Activated naive CD4-positive, alpha-beta T cell treated with anti-CD3 and anti-CD28 coated beads for 36 hours (primary cell): ENCODE measurements at regions of chr15 and their contacts with region 1.

Region 1: GRCh38 chr15:39874890-39875549 is 45.0 kb downstream of the GPR176 start:
- DNase-seq: peak; percentile 54
- H3K4me3 Mint-ChIP-seq: no peak overlapping the region
- H3K27ac Mint-ChIP-seq: no peak overlapping the region
- H3K4me1 Mint-ChIP-seq: peaks cover 4% of the 10 kb centered on the region
- H3K27me3 Mint-ChIP-seq: peaks cover 2% of the 10 kb centered on the region

Region 2: GRCh38 chr15:39686000-39686613 is 188.9 kb before region 1 on chr15:
- CTCF ChIA-PET with region 1: interaction called, 4 read pairs
- intact Hi-C with region 1: loop called (anchors 1 kb)
- DNase-seq: peak; percentile 54
- H3K4me3 Mint-ChIP-seq: no peak overlapping the region
- H3K27ac Mint-ChIP-seq: no peak overlapping the region
- H3K4me1 Mint-ChIP-seq: no peaks in the 10 kb centered on the region
- H3K27me3 Mint-ChIP-seq: no peaks in the 10 kb centered on the region

Region 3: DNA sequence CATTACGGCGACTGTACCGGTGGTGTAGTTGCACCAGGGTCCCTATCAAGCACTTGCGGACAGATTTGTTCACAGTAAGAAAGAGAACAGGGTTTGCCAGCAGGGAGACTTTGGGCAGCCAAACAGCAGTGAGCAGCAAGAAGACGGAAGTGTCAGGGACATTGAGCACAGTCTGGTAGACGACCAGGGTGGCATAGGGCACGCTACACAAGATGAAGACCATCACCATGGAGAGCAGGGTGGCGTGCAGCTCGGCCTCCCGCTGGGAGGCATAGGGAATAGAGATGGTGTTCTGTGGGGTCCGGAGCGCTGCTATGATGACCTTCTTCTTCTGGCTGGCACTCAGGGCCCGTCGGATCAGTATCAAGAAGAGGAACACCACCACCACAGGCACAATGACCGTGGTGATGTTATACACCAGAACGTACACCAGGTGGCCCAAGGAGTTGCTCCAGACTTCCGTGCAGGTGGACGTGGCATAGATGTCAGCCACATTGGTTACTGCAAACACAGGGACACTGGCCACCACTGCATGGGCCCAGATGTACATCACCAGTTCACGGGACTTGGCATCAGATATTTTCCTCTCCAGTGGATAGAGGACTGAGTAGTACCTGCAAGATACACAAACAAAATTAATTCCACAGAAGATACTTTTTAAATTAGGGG is 73.2 kb before region 1 on chr15:
- CTCF ChIA-PET with region 1: no interaction called
- intact Hi-C with region 1: loop called (anchors 1 kb)
- DNase-seq: peak; percentile 34
- H3K4me3 Mint-ChIP-seq: no peak overlapping the region
- H3K27ac Mint-ChIP-seq: no peak overlapping the region
- H3K4me1 Mint-ChIP-seq: no peaks in the 10 kb centered on the region
- H3K27me3 Mint-ChIP-seq: peaks cover 21% of the 10 kb centered on the region